ENCODE measurements at regions of chr1 and their contacts with region 1.

Region 1: GRCh38 chr1:219660666-219661463 is 48.0 kb upstream of the ZC3H11B start:
- ATAC-seq: peak; percentile 66 to 99 (median 98)
- H3K4me3 ChIP-seq: peak overlapping the region in 1 of 5 donors; percentile 5
- H3K27ac ChIP-seq: no peak overlapping the region
- H3K4me1 ChIP-seq: peaks cover 9 to 10% of the 10 kb centered on the region in 2 donors

Region 2: DNA sequence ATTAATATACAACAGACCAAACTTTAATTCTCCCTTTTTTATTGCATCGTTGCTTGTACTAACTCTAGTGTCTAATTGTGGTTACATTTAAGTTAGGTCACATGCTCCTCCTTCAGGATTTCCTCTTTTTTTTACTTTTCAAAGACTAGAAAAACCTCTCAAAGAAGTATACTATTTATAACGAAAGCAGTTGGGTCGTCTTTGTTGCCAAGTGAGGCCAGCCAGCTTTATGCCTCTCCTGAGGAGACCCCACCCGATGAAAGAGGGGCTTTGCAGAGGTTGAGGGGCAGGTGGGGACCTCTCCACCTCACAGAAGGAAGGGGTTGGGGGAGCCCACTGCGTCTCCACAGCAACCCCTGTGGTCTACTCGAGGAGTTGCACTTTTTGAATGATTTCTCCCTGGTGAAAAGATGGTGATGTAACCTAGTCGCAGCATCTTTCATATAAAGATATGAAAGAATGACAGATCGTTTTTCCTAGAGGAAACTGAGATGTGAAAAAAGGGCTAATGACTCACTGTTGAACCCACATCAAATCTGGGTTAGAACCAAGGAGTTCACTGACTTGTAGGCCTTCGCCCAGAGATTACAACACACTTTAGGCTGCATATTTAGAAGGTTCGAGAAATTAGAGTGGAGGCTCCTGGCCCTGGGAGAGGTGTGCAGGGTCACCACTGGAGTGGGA is 1309.3 kb before region 1 on chr1:
- in situ Hi-C with region 1: loop called in 6 of 9 experiments (anchors 25 kb)
- ATAC-seq: peak in 7 of 8 experiments; percentile 10 to 47 (median 24)
- H3K4me3 ChIP-seq: peak overlapping the region in 1 of 5 donors; percentile 1
- H3K27ac ChIP-seq: no peak overlapping the region
- H3K4me1 ChIP-seq: peaks cover 9 to 52% of the 10 kb centered on the region in 2 donors